Dendritic cell treated with granulocyte-macrophage colony-stimulating factor and Interleukin-4, amounts not matched to agents 40 ng/mL and 50 ng/mL, for 4 days (primary cell): ENCODE measurements at regions of chr1 and their contacts with region 1.

Region 1: DNA sequence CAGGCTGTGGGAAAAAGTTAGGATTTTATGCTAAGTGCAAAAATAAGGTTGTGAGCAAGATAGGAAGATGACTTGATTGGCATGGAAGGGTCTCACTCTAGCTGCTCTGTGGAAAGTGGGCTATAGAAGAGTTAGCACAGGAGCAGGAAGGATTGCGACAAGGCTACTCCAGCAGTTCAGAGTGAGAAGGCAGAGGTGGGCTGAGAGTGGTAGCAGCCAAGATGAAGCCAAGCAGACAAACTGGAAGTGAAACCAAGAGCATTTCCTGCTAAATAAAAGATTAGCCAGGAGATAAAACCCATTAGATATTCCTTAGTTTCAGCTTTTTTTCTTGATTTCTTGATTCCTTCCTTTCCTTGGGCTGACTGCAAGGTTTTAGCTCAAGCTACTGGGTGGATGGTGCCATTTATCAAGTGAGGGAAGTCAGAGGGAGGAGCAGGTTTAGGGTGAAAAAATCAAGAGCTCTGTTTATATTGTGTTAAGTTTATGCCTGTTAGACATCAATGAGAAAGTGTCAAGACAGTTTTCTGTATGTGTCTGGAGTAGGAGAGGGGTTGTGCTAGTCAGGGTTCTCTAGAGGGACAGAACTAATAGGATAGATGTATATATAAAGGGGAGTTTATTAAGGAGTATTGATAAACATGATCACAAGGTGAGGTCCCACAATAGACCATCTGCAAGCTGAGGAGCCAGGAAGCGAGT is 33.1 kb upstream of the ZNF644 start:
- H3K4me3 Mint-ChIP-seq: no peak overlapping the region
- H3K27ac Mint-ChIP-seq: no peak overlapping the region
- H3K4me1 Mint-ChIP-seq: peaks cover 6% of the 10 kb centered on the region
- H3K27me3 Mint-ChIP-seq: no peaks in the 10 kb centered on the region

Region 2: GRCh38 chr1:91070298-91070697 is 15.4 kb after region 1 on chr1:
- intact Hi-C with region 1: loop called (anchors 2 kb)
- H3K4me3 Mint-ChIP-seq: no peak overlapping the region
- H3K27ac Mint-ChIP-seq: no peak overlapping the region
- H3K4me1 Mint-ChIP-seq: peaks cover under 1% of the 10 kb centered on the region
- H3K27me3 Mint-ChIP-seq: no peaks in the 10 kb centered on the region

Region 3: DNA sequence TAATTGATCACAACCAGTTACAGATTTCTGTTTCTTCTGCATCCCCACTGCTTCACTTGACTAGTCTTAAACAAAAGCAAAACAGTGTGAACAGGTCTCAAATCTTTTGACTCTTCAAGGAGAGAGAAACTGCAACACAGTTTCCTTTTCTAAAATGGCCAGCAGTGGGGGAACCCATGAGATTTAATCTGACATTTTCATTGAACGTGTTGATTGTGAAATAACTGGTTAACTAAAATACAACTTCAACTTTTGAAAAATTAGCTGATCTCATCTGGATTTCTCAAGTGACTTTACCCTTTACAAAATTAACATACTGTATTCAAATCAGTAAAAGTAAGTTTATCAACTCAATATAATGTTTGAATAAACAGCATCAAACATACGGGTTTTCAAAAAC is 206.7 kb after region 1 on chr1:
- intact Hi-C with region 1: no loop called
- H3K4me3 Mint-ChIP-seq: no peak overlapping the region
- H3K27ac Mint-ChIP-seq: no peak overlapping the region
- H3K4me1 Mint-ChIP-seq: no peaks in the 10 kb centered on the region
- H3K27me3 Mint-ChIP-seq: no peaks in the 10 kb centered on the region